ENCODE measurements at regions of chr4 and their contacts with region 1.

Region 1: GRCh38 chr4:87422104-87423052 is at the start of gene NUDT9:
- H3K4me3 Mint-ChIP-seq: peak within 1 kb of the TSS; percentile 96
- H3K27ac Mint-ChIP-seq: peak within 1 kb of the TSS; percentile 98
- H3K4me1 Mint-ChIP-seq: peaks cover 24% of the 10 kb centered on the region
- H3K27me3 Mint-ChIP-seq: no peaks in the 10 kb centered on the region

Region 2: GRCh38 chr4:87053802-87054767 is 368.3 kb before region 1 on chr4:
- intact Hi-C with region 1: no loop called
- H3K4me3 Mint-ChIP-seq: no peak overlapping the region
- H3K27ac Mint-ChIP-seq: peak overlapping the region; percentile 78
- H3K4me1 Mint-ChIP-seq: peaks cover 91% of the 10 kb centered on the region
- H3K27me3 Mint-ChIP-seq: no peaks in the 10 kb centered on the region

Region 3: GRCh38 chr4:87339440-87339839 is 82.9 kb before region 1 on chr4:
- intact Hi-C with region 1: no loop called
- H3K4me3 Mint-ChIP-seq: no peak overlapping the region
- H3K27ac Mint-ChIP-seq: no peak overlapping the region
- H3K4me1 Mint-ChIP-seq: no peaks in the 10 kb centered on the region
- H3K27me3 Mint-ChIP-seq: no peaks in the 10 kb centered on the region

Region 4: DNA sequence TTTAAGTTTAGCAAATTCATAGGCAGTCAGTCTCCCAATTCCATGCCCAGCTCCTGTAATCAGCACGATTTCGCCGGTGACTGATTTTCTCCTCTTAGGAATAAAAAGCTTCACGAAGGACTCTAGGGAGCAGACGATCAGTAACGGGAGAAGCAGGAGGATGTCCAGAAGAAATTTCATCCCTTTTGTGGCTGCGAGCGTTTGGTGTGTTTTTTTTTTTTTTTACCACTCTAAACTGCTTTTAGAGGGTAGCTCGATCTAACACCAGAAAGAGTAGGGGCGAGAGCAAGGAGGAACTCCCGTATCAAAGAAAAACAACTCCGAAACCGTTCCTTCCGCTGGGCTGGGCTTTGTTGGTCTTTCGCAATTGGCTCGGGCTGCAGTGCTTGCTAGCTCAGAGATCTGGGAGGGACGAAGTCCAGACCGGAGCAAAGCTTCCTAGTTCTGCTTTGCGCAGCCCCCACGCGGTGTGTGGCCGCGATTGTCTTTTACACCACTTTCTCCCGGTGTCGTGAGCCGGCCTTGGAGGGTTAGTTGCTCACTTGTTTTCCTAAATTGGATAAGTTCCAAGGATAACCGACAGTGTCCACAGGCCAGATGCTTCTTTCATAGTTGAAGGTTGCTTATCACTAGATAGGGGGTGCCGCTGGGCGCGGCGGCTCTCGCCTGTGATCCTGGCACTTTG is 31.3 kb before region 1 on chr4 and contains the start of gene HSD17B11:
- intact Hi-C with region 1: loop called (anchors 1 kb)
- H3K4me3 Mint-ChIP-seq: peak within 1 kb of the TSS; percentile 90
- H3K27ac Mint-ChIP-seq: peak within 1 kb of the TSS; percentile 93
- H3K4me1 Mint-ChIP-seq: peaks cover 36% of the 10 kb centered on the region
- H3K27me3 Mint-ChIP-seq: no peaks in the 10 kb centered on the region